ENCODE measurements at regions of chr17 and their contacts with region 1.

Region 1: DNA sequence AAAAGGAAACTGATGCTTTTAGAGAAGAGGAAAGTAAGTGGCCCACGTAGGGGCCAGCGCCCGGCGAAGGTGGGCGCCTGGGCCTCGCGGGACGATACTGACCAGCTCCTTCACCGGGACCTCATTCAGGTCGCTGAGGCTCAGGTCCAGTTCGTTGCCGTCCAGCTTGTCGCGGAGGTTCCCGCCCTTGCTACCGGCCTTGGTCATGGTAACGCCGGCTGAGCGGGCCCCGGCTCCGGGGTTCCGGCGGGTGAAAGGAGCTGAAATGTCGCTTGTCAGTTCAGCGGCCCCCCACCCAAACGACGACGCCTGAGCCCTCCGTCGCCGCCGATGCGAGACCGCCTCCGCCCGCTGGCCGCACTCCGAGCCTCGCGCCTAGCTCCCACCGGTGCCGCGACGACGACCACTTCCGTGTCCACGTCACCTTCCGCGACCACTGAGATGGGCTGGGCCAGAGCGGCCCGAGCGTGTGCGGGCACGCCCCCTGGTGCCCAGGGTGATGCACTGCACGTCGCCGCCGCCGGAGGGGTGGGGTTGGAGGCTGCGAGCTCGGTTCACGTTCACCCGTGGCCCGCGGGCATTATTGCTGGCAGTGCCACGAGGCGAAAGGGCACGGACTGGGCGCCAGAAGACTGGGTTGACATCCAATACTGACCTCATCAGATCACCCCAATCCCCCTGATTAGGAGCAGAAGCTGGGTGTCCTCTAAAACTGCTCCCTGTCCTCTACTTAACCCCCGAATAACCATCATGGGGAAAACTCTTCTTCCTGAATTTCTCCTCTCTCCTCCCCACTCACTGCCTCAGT is at the start of gene LRRC59:
- DNase-seq: peak; percentile 98
- ATAC-seq: peak; percentile 94
- H3K4me3 Mint-ChIP-seq: peak within 1 kb of the TSS; percentile 98
- H3K27ac Mint-ChIP-seq: peak within 1 kb of the TSS; percentile 88
- H3K4me1 Mint-ChIP-seq: peaks cover 21% of the 10 kb centered on the region
- H3K27me3 Mint-ChIP-seq: peaks cover 1% of the 10 kb centered on the region
- total RNA-seq, gene LRRC59: 45.0 to 47.1 TPM

Region 2: DNA sequence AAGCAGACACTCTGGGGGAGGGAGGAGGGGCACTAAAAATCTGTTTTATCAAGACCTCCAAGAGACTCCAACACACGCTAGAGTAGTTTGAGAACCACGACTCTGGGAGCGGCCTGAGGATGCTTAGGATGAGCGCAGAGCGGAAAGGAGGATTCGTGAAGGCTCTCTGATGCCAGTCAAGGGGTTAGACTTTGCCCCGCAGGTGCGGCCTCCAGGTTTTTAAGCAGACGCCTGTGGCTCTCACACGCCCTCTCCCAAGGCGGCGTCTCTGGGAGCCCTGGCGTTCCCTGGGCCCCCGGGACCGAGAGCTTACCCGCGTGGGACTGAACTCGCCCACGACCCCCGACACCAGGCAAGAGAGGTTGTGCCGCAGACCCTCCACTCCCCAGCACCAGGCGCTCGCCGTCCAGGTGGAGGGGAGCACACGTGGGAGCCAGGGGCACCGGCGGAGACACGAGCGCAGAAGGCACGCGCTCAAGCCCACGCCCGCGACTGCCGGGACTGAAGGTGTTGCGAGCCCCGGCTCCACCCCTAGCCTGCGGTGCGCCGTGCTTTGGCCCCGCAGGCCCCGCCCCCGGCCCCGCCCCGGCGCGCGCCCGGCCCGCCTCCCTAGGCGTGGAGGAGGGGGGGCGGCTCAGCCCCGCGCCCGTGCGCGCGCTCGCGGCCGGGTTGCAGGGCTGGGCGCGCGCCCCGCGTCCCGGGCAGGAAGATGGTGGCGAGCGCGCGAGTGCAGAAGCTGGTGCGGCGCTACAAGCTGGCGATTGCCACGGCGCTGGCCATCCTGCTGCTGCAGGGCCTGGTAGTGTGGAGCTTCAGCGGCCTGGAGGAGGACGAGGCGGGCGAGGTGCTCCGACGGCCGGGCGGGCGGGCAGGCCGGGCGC is 51.6 kb before region 1 on chr17 and contains the start of gene XYLT2:
- POLR2A ChIA-PET with region 1: interaction called, 24 read pairs
- DNase-seq: peak; percentile 99
- ATAC-seq: peak; percentile 84
- H3K4me3 Mint-ChIP-seq: peak within 1 kb of the TSS; percentile 93
- H3K27ac Mint-ChIP-seq: peak within 1 kb of the TSS; percentile 93
- H3K4me1 Mint-ChIP-seq: peaks cover 25% of the 10 kb centered on the region
- H3K27me3 Mint-ChIP-seq: no peaks in the 10 kb centered on the region
- total RNA-seq, gene XYLT2: 29.0 to 31.9 TPM

Region 3: GRCh38 chr17:50361561-50362480 is 35.5 kb before region 1 on chr17:
- POLR2A ChIA-PET with region 1: interaction called, 20 read pairs
- DNase-seq: no peak
- ATAC-seq: peak; percentile 79
- H3K4me3 Mint-ChIP-seq: peak overlapping the region; percentile 2
- H3K27ac Mint-ChIP-seq: peak overlapping the region; percentile 70
- H3K4me1 Mint-ChIP-seq: peaks cover 14% of the 10 kb centered on the region
- H3K27me3 Mint-ChIP-seq: no peaks in the 10 kb centered on the region

Region 4: GRCh38 chr17:50372758-50373556 is 24.4 kb before region 1 on chr17 and contains the starts of genes EME1 and MRPL27:
- POLR2A ChIA-PET with region 1: interaction called, 39 read pairs
- DNase-seq: peak; percentile 88
- ATAC-seq: peak; percentile 88
- H3K4me3 Mint-ChIP-seq: peak within 1 kb of the TSS; percentile 98
- H3K27ac Mint-ChIP-seq: peak within 1 kb of the TSS; percentile 100
- H3K4me1 Mint-ChIP-seq: peaks cover 21% of the 10 kb centered on the region
- H3K27me3 Mint-ChIP-seq: no peaks in the 10 kb centered on the region
- total RNA-seq, gene EME1: 27.3 to 28.8 TPM
- total RNA-seq, gene MRPL27: 49.6 to 51.0 TPM

Region 5: GRCh38 chr17:50425682-50426471 is 28.6 kb after region 1 on chr17 and contains the start of gene ACSF2:
- POLR2A ChIA-PET with region 1: interaction called, 27 read pairs
- DNase-seq: peak; percentile 84
- ATAC-seq: peak; percentile 82
- H3K4me3 Mint-ChIP-seq: peak within 1 kb of the TSS; percentile 91
- H3K27ac Mint-ChIP-seq: peak within 1 kb of the TSS; percentile 87
- H3K4me1 Mint-ChIP-seq: peaks cover 34% of the 10 kb centered on the region
- H3K27me3 Mint-ChIP-seq: no peaks in the 10 kb centered on the region
- total RNA-seq, gene ACSF2: 42.1 to 45.0 TPM

Region 6: DNA sequence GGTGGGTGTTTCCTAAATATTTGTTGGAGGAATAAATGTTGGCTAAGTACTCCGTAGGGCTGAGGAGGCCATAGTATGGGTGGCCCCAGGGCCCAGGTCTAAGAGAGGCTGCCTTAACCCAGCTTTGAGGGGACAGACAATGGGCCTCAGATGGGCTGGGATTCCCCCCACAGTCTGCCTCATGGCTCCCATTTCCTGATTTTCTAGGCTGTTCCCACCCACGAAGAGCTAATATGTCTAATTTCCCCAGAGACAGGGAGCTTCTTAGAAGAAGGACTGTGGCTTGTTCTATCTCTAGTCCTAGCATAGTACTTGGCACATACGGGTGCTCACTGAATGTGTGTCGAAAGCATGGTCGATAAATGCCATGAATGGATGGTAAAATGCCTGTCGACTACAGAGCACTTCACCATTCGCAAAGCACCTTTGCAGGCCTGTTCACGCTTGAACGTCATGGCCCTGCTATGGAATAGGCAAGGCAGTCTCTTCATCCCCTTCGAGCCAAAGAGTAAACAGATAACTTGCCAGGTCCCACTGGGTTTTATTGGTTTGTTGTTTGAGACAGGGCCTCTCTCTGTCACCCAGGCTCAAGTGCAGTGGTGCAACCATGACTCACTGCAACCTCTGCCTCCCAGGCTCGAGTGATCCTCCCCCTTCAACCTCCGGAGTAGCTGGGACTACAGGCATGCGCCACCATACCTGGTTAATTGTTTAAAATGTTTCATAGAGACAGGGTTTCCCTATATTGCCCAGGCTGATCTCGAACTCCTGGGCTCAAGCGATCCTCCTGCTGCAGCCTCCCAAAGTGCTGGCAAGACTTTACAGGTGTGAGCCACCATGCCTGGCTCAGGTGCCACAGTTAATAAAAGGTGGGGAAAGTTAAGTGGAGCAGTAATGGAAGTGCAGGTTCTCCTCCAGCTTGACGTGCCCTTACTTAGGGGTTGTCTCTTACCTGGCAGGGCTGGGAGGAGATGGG is 61.7 kb after region 1 on chr17:
- POLR2A ChIA-PET with region 1: no interaction called
- DNase-seq: no peak
- ATAC-seq: no peak
- H3K4me3 Mint-ChIP-seq: no peak overlapping the region
- H3K27ac Mint-ChIP-seq: no peak overlapping the region
- H3K4me1 Mint-ChIP-seq: no peaks in the 10 kb centered on the region
- H3K27me3 Mint-ChIP-seq: no peaks in the 10 kb centered on the region

Measured in activated naive CD8-positive, alpha-beta T cell treated with anti-CD3 and anti-CD28 coated beads, Interleukin-2, amount 10 ng/mL, durations not matched to agents 7 days and 5 days (primary cell).